ENCODE measurements at regions of chr2 and their contacts with region 1.

Region 1: GRCh38 chr2:200864176-200864976 is at the start of gene CLK1:
- DNase-seq: peak; percentile 92 to 98 (median 94)
- H3K4me3 ChIP-seq: peak within 1 kb of the TSS; percentile 100
- H3K4me3 Mint-ChIP-seq: peak within 1 kb of the TSS; percentile 92 to 99 (median 94)
- H3K27ac ChIP-seq: peak within 1 kb of the TSS; percentile 100
- H3K27ac Mint-ChIP-seq: peak within 1 kb of the TSS; percentile 92 to 100 (median 100)
- H3K4me1 ChIP-seq: peaks cover 28% of the 10 kb centered on the region
- H3K4me1 Mint-ChIP-seq: peaks cover 41 to 51% (median 49%) of the 10 kb centered on the region in 3 donors
- H3K27me3 ChIP-seq: no peaks in the 10 kb centered on the region
- H3K27me3 Mint-ChIP-seq: peaks cover 0 to 20% of the 10 kb centered on the region in 2 donors
- total RNA-seq, gene CLK1: 110 to 114 TPM

Region 2: GRCh38 chr2:200713003-200713703 is 151.2 kb before region 1 on chr2:
- CTCF ChIA-PET with region 1: interaction called, 15 read pairs
- POLR2A ChIA-PET with region 1: interaction called, 26 read pairs
- DNase-seq: peak; percentile 88 to 96 (median 94)
- H3K4me3 ChIP-seq: peak overlapping the region; percentile 14
- H3K4me3 Mint-ChIP-seq: peak overlapping the region; percentile 53 to 84 (median 77)
- H3K27ac ChIP-seq: peak overlapping the region; percentile 65
- H3K27ac Mint-ChIP-seq: peak overlapping the region; percentile 96 to 100 (median 98)
- H3K4me1 ChIP-seq: peaks cover 7% of the 10 kb centered on the region
- H3K4me1 Mint-ChIP-seq: peaks cover 12 to 15% (median 13%) of the 10 kb centered on the region in 3 donors
- H3K27me3 ChIP-seq: no peaks in the 10 kb centered on the region
- H3K27me3 Mint-ChIP-seq: peaks cover 2 to 18% of the 10 kb centered on the region in 2 donors

Region 3: GRCh38 chr2:200742426-200742825 is 122.0 kb before region 1 on chr2:
- CTCF ChIA-PET with region 1: no interaction called
- POLR2A ChIA-PET with region 1: no interaction called
- DNase-seq: no peak
- H3K4me3 ChIP-seq: no peak overlapping the region
- H3K4me3 Mint-ChIP-seq: no peak overlapping the region
- H3K27ac ChIP-seq: no peak overlapping the region
- H3K27ac Mint-ChIP-seq: no peak overlapping the region
- H3K4me1 ChIP-seq: no peaks in the 10 kb centered on the region
- H3K4me1 Mint-ChIP-seq: no peaks in the 10 kb centered on the region
- H3K27me3 ChIP-seq: no peaks in the 10 kb centered on the region
- H3K27me3 Mint-ChIP-seq: peaks cover 0 to 12% of the 10 kb centered on the region in 2 donors

Region 4: GRCh38 chr2:200811336-200812121 is 52.8 kb before region 1 on chr2 and contains the start of gene BZW1:
- CTCF ChIA-PET with region 1: interaction called, 3 read pairs
- POLR2A ChIA-PET with region 1: interaction called, 22 read pairs
- DNase-seq: peak; percentile 95 to 98 (median 98)
- H3K4me3 ChIP-seq: peak within 1 kb of the TSS; percentile 85
- H3K4me3 Mint-ChIP-seq: peak within 1 kb of the TSS; percentile 97 to 100 (median 99)
- H3K27ac ChIP-seq: peak within 1 kb of the TSS; percentile 95
- H3K27ac Mint-ChIP-seq: peak within 1 kb of the TSS; percentile 95 to 99 (median 98)
- H3K4me1 ChIP-seq: peaks cover 30% of the 10 kb centered on the region
- H3K4me1 Mint-ChIP-seq: peaks cover 48 to 61% (median 60%) of the 10 kb centered on the region in 3 donors
- H3K27me3 ChIP-seq: no peaks in the 10 kb centered on the region
- H3K27me3 Mint-ChIP-seq: peaks cover 0 to 6% of the 10 kb centered on the region in 2 donors
- total RNA-seq, gene BZW1: 495 to 533 TPM

Region 5: DNA sequence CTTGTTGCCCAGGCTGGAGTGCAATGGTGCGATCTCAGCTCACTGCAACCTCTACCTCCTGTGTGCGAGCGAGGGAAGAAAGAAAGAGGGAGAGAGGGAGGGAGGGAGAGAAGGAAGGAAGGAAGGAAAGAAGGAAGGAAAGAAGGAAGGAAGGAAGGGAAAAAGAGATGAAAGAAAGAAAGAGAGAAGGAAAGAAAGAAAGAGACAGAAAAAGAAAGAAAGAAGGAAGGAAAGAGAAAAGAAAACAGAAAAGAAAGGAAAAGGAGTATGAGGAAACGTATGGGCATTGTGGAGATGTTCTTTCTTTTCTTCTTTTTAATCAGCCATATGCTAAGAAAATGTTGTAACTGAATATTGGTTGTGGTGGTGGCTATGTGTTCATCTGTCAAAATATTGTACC is 16.4 kb before region 1 on chr2:
- CTCF ChIA-PET with region 1: interaction called, 8 read pairs
- POLR2A ChIA-PET with region 1: interaction called, 11 read pairs
- DNase-seq: no peak
- H3K4me3 ChIP-seq: no peak overlapping the region
- H3K4me3 Mint-ChIP-seq: no peak overlapping the region
- H3K27ac ChIP-seq: no peak overlapping the region
- H3K27ac Mint-ChIP-seq: peak overlapping the region in 2 of 8 donors; percentile 8 to 79
- H3K4me1 ChIP-seq: no peaks in the 10 kb centered on the region
- H3K4me1 Mint-ChIP-seq: peaks cover 0 to 13% (median 12%) of the 10 kb centered on the region in 3 donors
- H3K27me3 ChIP-seq: no peaks in the 10 kb centered on the region
- H3K27me3 Mint-ChIP-seq: peaks cover 0 to 2% of the 10 kb centered on the region in 2 donors

Region 6: DNA sequence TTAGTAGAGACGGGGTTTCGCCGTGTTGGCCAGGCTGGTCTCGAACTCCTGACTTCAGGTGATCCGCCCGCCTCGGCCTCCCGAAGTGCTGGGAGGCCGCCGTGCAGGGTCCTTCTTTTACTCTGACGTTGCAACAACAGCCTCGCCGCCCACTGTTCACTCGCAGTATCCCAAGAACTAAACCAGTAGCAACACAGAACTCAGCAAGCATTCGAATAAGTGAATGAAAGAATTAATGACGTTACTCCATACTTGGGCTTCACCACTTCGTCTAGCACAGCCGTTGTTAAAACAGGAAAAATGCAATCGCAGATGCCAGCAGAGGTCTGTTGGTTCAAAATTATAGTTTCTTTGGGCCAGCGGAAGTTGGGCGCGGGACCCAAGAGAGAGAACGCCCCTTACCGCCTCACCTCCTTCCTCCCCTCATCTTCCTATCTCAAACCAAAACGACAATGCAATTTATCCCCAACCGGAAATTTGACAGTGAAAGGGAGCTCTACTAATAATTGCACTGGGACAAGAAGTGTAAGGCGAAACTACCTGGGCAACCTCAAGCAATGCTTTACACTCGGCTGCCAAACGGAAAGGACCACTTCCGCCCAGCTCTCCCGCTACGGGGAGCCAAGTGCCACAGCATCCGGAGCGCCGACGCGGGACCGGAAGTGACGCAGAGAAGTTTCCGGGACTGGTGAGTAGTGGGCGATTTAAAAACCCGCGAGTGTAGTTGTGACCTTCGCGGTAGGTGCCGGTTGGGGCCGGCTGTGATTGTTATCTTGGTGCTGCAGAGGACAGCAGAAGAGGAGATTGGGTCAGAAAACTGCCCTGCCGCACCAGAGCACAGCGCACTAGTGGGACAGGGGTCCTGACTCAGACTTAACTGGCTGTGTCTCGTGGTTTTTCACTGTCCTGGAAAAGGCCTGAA is 24.6 kb after region 1 on chr2 and contains the starts of genes NIF3L1 and PPIL3:
- CTCF ChIA-PET with region 1: interaction called, 12 read pairs
- POLR2A ChIA-PET with region 1: interaction called, 90 read pairs
- DNase-seq: peak; percentile 92 to 98 (median 95)
- H3K4me3 ChIP-seq: peak within 1 kb of the TSS; percentile 69
- H3K4me3 Mint-ChIP-seq: peak within 1 kb of the TSS; percentile 91 to 99 (median 96)
- H3K27ac ChIP-seq: peak within 1 kb of the TSS; percentile 92
- H3K27ac Mint-ChIP-seq: peak within 1 kb of the TSS; percentile 98 to 100 (median 99)
- H3K4me1 ChIP-seq: peaks cover 25% of the 10 kb centered on the region
- H3K4me1 Mint-ChIP-seq: peaks cover 45 to 66% (median 66%) of the 10 kb centered on the region in 3 donors
- H3K27me3 ChIP-seq: no peaks in the 10 kb centered on the region
- H3K27me3 Mint-ChIP-seq: peaks cover 0 to 8% of the 10 kb centered on the region in 2 donors
- total RNA-seq, gene NIF3L1: 25.7 to 32.0 TPM
- total RNA-seq, gene PPIL3: 24.9 to 31.0 TPM

Region 7: GRCh38 chr2:200963124-200963917 is 98.9 kb after region 1 on chr2 and contains the start of gene ORC2:
- CTCF ChIA-PET with region 1: interaction called, 3 read pairs
- POLR2A ChIA-PET with region 1: interaction called, 17 read pairs
- DNase-seq: peak; percentile 89 to 96 (median 93)
- H3K4me3 ChIP-seq: peak within 1 kb of the TSS; percentile 93
- H3K4me3 Mint-ChIP-seq: peak within 1 kb of the TSS; percentile 97 to 99 (median 97)
- H3K27ac ChIP-seq: peak within 1 kb of the TSS; percentile 74
- H3K27ac Mint-ChIP-seq: peak within 1 kb of the TSS; percentile 98 to 100 (median 98)
- H3K4me1 ChIP-seq: peaks cover 32% of the 10 kb centered on the region
- H3K4me1 Mint-ChIP-seq: peaks cover 59 to 73% (median 70%) of the 10 kb centered on the region in 3 donors
- H3K27me3 ChIP-seq: no peaks in the 10 kb centered on the region
- H3K27me3 Mint-ChIP-seq: peaks cover 0 to 2% of the 10 kb centered on the region in 2 donors
- total RNA-seq, gene ORC2: 47.9 to 51.9 TPM